ENCODE measurements at regions of chr17 and their contacts with region 1.

Region 1: GRCh38 chr17:19996502-19996901 is 12.7 kb upstream of the SPECC1 start:
- DNase-seq: no peak
- H3K4me3 ChIP-seq: no peak overlapping the region
- CTCF ChIP-seq: no peak
- POLR2A ChIP-seq: no peak

Region 2: DNA sequence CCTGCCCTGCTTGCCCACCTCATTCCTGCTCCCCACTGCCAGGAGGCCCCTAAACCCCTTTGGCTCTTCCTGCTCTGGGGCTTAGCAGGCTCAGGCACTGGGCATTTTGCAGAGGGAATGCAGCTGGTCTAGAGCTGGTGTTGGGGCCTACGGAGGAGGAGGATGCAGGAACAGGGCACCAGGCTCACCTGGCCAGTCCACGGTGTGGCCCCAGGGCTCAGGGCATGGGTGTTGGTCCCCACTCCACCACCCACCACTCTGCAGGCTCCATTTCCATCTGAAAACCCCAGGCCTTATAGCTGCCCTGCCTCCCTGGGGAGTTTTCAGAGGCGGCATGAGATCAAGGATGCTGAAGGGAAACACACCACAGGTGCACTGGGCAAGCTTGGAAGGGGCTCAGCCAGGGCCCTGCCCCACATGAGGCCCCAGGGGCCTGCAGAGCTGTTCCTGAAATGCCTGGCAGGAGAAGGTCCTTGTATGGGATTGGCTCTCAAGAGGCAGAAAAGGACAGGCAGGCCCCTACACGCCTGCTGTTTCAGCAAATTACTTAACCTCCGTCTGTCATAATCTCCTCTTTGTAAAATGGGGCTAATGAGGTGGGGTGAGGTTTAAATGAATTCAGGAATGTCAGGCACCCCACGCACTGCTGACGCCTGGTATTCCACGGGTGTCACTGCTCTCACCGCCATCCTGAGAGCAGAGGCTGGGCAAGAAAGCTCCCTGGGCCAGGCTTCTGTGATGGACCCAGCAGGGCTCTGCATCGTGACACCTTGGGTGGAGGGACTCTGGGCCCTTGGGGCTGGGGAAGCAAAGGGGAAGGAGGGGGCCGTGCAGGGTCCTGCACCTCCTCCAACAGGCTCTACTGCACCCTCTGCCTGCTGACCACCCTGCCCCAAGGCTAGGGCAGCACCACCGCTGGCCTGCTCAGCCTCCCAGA is 289.4 kb before region 1 on chr17:
- intact Hi-C with region 1: no loop called
- DNase-seq: peak in 1 of 2 donors; percentile 84
- H3K4me3 ChIP-seq: no peak overlapping the region
- CTCF ChIP-seq: no peak
- POLR2A ChIP-seq: no peak

Region 3: DNA sequence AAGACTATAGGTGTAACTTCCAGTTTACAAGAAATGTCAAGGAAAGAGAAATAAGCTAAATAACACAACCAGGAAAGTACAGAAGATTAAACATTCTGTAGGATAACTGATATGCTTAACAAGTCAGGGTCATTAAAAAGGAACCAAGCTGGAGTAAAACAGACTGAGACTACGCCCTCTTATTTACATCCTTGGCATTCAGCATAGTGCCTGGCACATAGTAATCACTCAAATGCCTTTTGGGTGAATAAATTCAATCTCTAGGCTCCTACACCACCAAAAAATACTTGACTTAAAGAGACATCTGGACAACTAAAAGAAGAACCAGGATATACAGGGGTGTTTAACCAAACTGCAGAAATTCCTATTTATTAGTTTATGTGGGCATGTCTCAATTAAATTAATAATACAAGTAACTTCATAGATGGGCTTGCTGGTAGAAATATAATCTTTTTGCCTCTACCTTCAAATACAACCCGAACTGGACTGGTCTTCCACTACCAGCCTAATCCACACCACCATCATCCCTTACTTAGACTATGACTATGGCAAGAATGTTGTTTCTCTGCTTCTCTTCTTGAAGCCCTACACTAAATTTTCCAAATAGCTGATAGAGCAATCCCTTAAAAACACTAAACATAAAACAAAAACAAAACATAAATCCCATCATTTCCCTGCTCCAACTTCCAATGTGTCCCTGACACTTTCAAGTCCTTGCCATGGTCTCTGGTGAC is 81.1 kb before region 1 on chr17:
- intact Hi-C with region 1: no loop called
- DNase-seq: no peak
- H3K4me3 ChIP-seq: no peak overlapping the region
- CTCF ChIP-seq: no peak
- POLR2A ChIP-seq: no peak

Region 4: GRCh38 chr17:20114466-20114865 is 118.0 kb after region 1 on chr17:
- intact Hi-C with region 1: loop called (anchors 5 kb)
- DNase-seq: no peak
- H3K4me3 ChIP-seq: no peak overlapping the region
- CTCF ChIP-seq: no peak
- POLR2A ChIP-seq: no peak